ENCODE measurements at regions of chr6 and their contacts with region 1.

Region 1: GRCh38 chr6:134882426-134883038 is 67.4 kb downstream of the ALDH8A1 start:
- DNase-seq: peak; percentile 48 to 65
- ATAC-seq: peak; percentile 73 to 94 (median 91)
- H3K4me3 ChIP-seq: no peak overlapping the region
- H3K27ac ChIP-seq: no peak overlapping the region
- H3K4me1 ChIP-seq: peaks cover 4% of the 10 kb centered on the region
- H3K27me3 ChIP-seq: no peaks in the 10 kb centered on the region
- CTCF ChIP-seq: peak; percentile 98

Region 2: GRCh38 chr6:134123666-134124208 is 758.8 kb before region 1 on chr6:
- intact Hi-C with region 1: loop called in 1 of 2 experiments (anchors 5 kb)
- DNase-seq: no peak
- ATAC-seq: peak in 2 of 4 donors; percentile 41 to 68
- H3K4me3 ChIP-seq: no peak overlapping the region
- H3K27ac ChIP-seq: no peak overlapping the region
- H3K4me1 ChIP-seq: no peaks in the 10 kb centered on the region
- H3K27me3 ChIP-seq: no peaks in the 10 kb centered on the region
- CTCF ChIP-seq: peak; percentile 79

Region 3: DNA sequence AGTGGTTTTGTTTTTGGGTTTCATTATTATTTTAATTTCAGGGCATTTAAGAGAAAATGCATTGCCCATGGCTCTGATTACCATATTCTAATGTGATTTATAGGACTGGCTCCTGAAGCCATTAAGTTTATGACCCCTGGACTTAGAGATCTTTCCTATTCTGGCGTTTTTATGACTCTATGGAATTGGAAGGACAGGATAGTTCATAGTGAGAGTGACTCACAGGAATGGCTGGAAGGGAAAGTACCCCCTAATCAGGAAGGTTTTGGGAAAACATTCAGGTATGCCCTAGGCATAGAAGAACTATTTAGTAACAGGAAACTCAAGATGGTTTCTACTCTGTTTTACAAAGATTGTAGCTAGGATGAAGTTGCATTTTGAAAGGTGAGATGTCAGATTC is 721.5 kb before region 1 on chr6:
- intact Hi-C with region 1: loop called in 1 of 2 experiments (anchors 2 kb)
- DNase-seq: no peak
- ATAC-seq: no peak
- H3K4me3 ChIP-seq: no peak overlapping the region
- H3K27ac ChIP-seq: no peak overlapping the region
- H3K4me1 ChIP-seq: no peaks in the 10 kb centered on the region
- H3K27me3 ChIP-seq: no peaks in the 10 kb centered on the region
- CTCF ChIP-seq: no peak

Region 4: DNA sequence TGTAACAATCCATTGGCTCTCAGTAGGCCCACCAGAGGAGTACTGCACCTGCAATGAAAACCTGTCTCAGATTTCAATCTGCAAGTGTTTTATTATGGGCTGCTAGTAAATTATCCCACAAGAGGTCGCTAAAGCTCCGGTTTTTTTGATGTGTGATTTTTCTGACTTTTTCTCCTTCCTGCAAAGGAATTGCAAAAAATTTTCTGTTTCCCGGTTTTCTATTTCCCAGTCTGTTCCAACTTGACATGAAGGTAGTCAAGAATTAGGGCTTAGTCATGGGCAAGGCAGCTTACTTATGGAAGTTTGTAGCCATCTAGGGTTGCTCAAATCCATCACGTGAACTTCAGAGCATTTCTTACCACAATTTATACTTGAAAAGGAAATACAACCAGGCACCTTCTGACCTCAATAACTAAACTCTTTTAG is 653.5 kb after region 1 on chr6:
- intact Hi-C with region 1: no loop called
- DNase-seq: no peak
- ATAC-seq: peak in 2 of 4 donors; percentile 37 to 40
- H3K4me3 ChIP-seq: no peak overlapping the region
- H3K27ac ChIP-seq: no peak overlapping the region
- H3K4me1 ChIP-seq: no peaks in the 10 kb centered on the region
- H3K27me3 ChIP-seq: no peaks in the 10 kb centered on the region
- CTCF ChIP-seq: peak; percentile 68